ENCODE measurements at regions of chr18 and their contacts with region 1.

Region 1: DNA sequence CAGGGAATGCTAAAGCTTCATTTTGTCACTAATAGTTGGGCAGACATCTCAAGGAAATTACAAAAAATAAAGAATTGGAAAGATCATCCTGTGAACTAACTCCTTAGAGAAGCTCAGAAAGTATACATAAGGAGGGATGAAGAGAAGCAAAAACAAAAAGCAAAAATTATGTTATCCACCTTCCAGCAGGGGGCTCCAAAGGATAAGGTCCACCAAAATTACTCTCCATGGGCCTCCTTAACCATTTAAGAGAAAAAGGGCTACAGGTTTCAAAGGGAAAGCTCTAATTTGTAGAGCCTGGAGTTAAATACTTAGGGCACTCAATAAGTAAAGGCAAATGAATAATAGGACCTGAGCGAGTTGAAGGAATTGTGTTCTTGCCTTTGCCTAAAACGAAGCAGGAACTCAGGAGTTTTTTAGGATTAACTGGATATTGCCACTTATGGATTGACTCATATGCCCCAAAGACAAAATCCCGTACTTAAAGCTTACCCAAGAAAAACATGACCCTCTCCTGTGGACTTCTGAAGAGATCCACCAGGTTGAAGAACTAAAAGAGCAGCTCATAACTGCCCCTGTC is 1167.9 kb downstream of the DSC3 start:
- DNase-seq: peak; percentile 76
- H3K4me3 Mint-ChIP-seq: no peak overlapping the region
- H3K27ac Mint-ChIP-seq: no peak overlapping the region
- H3K4me1 Mint-ChIP-seq: no peaks in the 10 kb centered on the region
- H3K27me3 Mint-ChIP-seq: no peaks in the 10 kb centered on the region
- CTCF ChIP-seq: peak; percentile 70

Region 2: GRCh38 chr18:28961669-28962228 is 912.9 kb before region 1 on chr18:
- CTCF ChIA-PET with region 1: no interaction called
- POLR2A ChIA-PET with region 1: no interaction called
- intact Hi-C with region 1: loop called (anchors 10 kb)
- DNase-seq: peak; percentile 62
- H3K4me3 Mint-ChIP-seq: no peak overlapping the region
- H3K27ac Mint-ChIP-seq: no peak overlapping the region
- H3K4me1 Mint-ChIP-seq: peaks cover 4% of the 10 kb centered on the region
- H3K27me3 Mint-ChIP-seq: no peaks in the 10 kb centered on the region
- CTCF ChIP-seq: peak; percentile 64

Region 3: GRCh38 chr18:29811519-29811918 is 63.1 kb before region 1 on chr18:
- CTCF ChIA-PET with region 1: no interaction called
- POLR2A ChIA-PET with region 1: no interaction called
- intact Hi-C with region 1: no loop called
- DNase-seq: no peak
- H3K4me3 Mint-ChIP-seq: no peak overlapping the region
- H3K27ac Mint-ChIP-seq: no peak overlapping the region
- H3K4me1 Mint-ChIP-seq: no peaks in the 10 kb centered on the region
- H3K27me3 Mint-ChIP-seq: no peaks in the 10 kb centered on the region
- CTCF ChIP-seq: no peak

Region 4: GRCh38 chr18:29855637-29856036 is 19.0 kb before region 1 on chr18:
- CTCF ChIA-PET with region 1: interaction called, 10 read pairs
- POLR2A ChIA-PET with region 1: no interaction called
- intact Hi-C with region 1: no loop called
- DNase-seq: no peak
- H3K4me3 Mint-ChIP-seq: no peak overlapping the region
- H3K27ac Mint-ChIP-seq: no peak overlapping the region
- H3K4me1 Mint-ChIP-seq: no peaks in the 10 kb centered on the region
- H3K27me3 Mint-ChIP-seq: no peaks in the 10 kb centered on the region
- CTCF ChIP-seq: no peak

Region 5: DNA sequence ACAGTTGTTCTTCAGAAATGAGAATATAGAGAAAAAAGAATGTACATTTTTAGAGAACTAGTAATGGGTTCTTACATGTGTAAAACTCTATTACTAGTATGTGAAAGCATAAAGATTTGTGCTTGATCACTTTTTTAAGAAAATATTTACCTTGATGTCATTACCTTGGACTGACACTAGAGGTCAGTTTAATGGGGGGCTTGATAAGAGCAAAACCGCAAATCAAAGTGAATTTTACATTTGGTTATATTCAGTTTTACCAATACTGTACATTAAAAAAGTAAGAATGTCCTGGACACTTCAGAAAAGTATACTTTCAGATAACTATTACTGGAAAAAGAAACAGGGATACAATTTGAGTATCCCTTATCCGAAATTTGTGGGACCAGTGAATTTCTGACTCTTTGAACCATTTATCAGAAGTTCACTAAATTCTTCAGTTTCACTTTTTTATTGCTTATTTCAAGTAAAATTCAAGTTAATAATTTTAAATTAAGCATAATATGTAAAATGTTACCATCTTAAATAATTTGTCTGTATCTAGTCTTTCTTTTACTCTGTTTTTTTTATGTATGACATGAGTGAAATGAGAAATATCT is 18.4 kb after region 1 on chr18:
- CTCF ChIA-PET with region 1: interaction called, 10 read pairs
- POLR2A ChIA-PET with region 1: no interaction called
- intact Hi-C with region 1: no loop called
- DNase-seq: peak; percentile 16
- H3K4me3 Mint-ChIP-seq: no peak overlapping the region
- H3K27ac Mint-ChIP-seq: no peak overlapping the region
- H3K4me1 Mint-ChIP-seq: no peaks in the 10 kb centered on the region
- H3K27me3 Mint-ChIP-seq: no peaks in the 10 kb centered on the region
- CTCF ChIP-seq: peak; percentile 65

Region 6: DNA sequence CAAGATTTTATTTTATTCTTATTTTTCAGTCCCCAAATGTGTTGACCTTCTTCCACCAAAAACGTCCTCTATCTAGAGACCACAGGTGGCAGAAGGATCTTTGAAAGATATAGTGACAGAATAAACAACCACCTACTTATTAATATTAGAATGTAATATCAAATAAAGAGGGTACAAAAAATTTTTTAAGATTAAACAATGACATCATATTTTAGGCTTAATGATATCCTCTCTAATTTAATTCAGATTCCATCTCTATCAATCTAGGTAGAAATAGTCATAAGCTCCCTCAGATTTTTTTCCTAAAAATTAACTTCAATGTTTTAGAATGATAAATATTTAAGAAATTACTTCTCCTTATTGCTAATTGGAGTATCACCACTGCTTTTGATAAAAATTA is 108.4 kb after region 1 on chr18:
- CTCF ChIA-PET with region 1: no interaction called
- POLR2A ChIA-PET with region 1: no interaction called
- intact Hi-C with region 1: no loop called
- DNase-seq: no peak
- H3K4me3 Mint-ChIP-seq: no peak overlapping the region
- H3K27ac Mint-ChIP-seq: no peak overlapping the region
- H3K4me1 Mint-ChIP-seq: no peaks in the 10 kb centered on the region
- H3K27me3 Mint-ChIP-seq: no peaks in the 10 kb centered on the region
- CTCF ChIP-seq: no peak

Region 7: GRCh38 chr18:30889519-30890301 is 1015.1 kb after region 1 on chr18:
- CTCF ChIA-PET with region 1: interaction called, 60 read pairs
- POLR2A ChIA-PET with region 1: no interaction called
- intact Hi-C with region 1: loop called (anchors 5 kb)
- DNase-seq: peak; percentile 60
- H3K4me3 Mint-ChIP-seq: no peak overlapping the region
- H3K27ac Mint-ChIP-seq: no peak overlapping the region
- H3K4me1 Mint-ChIP-seq: no peaks in the 10 kb centered on the region
- H3K27me3 Mint-ChIP-seq: peaks cover 61% of the 10 kb centered on the region
- CTCF ChIP-seq: peak; percentile 23

Measured in MCF 10A (cell line).